Activated CD4-positive, alpha-beta memory T cell treated with anti-CD3 and anti-CD28 coated beads for 36 hours (primary cell): ENCODE measurements at regions of chr7 and their contacts with region 1.

Region 1: DNA sequence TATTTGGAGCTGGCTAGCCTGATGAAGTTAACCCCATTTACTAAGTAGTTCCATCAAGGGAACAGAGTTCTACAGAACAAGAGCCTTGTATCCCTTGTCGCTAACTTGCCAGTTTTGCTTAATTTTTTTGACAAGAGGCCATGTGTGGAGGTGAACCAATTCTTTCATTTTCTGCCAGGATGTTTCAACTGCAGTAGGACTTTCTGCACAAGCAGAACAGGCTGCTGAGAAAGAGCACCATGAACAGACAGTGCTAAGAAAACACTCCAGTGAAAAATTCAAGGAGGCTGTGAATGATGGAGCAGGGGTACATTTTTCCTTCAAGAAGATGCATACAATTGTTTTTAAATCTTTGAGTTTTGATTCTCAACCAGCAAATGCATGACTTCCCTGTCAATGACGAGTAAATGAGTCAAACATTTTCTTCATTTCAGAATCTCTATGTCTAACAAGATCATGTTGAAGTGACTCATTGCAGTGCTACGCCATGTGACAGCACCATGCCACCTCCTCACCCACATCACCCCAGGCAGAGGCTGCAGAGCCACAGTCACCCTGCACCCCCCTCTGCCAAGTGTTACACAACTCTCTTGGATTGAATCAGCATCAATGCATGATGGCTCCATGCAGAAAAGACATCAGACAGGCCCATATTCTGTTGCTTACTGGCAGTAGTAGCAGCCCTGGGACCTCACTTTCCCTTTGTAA is 193.1 kb downstream of the COBL start:
- DNase-seq: peak; percentile 92
- H3K4me3 Mint-ChIP-seq: peak overlapping the region; percentile 53
- H3K27ac Mint-ChIP-seq: peak overlapping the region; percentile 96
- H3K4me1 Mint-ChIP-seq: peaks cover 40% of the 10 kb centered on the region
- H3K27me3 Mint-ChIP-seq: peaks cover 1% of the 10 kb centered on the region

Region 2: DNA sequence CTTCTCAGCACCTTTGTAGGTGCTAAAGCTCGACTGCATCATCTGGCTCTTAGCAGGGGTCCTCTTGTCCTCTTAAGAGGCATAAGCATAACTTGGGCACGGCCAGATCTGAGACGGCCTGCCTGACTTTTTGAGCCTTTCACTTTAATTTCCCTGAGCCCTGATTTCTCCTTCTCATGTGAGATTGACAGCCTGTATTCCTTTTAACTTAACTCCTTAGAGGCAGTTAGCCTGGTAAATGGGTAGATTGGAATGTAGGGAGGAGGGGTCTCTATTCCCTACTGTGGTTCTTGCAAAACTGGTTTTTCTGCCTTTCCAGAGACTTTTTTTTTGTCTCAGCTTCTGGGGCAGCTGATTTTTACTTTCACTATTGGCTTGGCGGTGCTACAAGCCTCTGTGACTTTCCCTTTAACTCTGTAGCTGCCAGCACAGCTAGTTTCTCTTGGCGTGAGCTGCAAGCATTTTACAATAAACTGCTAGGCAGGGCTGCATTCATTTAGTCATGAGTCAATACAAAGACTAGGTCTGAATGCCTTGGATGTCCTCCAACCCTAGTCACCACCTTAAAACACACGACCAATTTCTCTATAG is 1054.4 kb before region 1 on chr7:
- CTCF ChIA-PET with region 1: no interaction called
- POLR2A ChIA-PET with region 1: no interaction called
- intact Hi-C with region 1: loop called (anchors 2 kb)
- DNase-seq: peak; percentile 46
- H3K4me3 Mint-ChIP-seq: peak overlapping the region; percentile 85
- H3K27ac Mint-ChIP-seq: peak overlapping the region; percentile 46
- H3K4me1 Mint-ChIP-seq: peaks cover 19% of the 10 kb centered on the region
- H3K27me3 Mint-ChIP-seq: no peaks in the 10 kb centered on the region

Region 3: DNA sequence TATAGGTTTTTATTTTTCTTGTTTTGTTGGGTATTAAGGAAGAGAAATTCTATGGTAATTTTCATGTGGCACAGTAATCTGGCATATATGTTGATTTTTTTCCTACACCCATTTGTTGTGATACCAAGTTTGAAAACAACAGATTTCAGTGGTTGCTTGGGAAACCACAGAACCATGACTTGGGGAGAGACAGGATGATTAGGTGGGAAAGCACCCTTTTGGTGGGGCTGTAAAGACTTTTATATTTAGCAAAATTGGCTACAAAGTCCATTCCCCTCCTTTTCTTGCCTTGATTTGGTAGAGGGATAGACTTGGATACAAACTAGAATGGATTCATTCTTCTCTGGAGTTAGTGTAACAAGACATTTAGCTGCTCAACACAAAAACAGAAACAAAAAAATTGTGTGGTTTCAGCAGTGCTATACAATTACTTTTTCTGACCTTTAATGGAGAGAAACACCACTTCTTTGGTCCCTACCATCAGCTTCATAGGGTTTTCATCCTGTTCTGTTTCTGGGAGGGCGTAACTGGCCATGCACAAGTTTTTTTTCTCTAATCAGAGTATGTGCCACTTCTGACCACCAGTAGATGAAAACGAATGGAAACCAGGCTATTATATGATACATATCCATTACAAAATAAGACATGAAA is 726.0 kb before region 1 on chr7:
- CTCF ChIA-PET with region 1: no interaction called
- POLR2A ChIA-PET with region 1: no interaction called
- intact Hi-C with region 1: loop called (anchors 1 kb)
- DNase-seq: peak; percentile 50
- H3K4me3 Mint-ChIP-seq: peak overlapping the region; percentile 20
- H3K27ac Mint-ChIP-seq: peak overlapping the region; percentile 84
- H3K4me1 Mint-ChIP-seq: peaks cover 79% of the 10 kb centered on the region
- H3K27me3 Mint-ChIP-seq: no peaks in the 10 kb centered on the region

Region 4: DNA sequence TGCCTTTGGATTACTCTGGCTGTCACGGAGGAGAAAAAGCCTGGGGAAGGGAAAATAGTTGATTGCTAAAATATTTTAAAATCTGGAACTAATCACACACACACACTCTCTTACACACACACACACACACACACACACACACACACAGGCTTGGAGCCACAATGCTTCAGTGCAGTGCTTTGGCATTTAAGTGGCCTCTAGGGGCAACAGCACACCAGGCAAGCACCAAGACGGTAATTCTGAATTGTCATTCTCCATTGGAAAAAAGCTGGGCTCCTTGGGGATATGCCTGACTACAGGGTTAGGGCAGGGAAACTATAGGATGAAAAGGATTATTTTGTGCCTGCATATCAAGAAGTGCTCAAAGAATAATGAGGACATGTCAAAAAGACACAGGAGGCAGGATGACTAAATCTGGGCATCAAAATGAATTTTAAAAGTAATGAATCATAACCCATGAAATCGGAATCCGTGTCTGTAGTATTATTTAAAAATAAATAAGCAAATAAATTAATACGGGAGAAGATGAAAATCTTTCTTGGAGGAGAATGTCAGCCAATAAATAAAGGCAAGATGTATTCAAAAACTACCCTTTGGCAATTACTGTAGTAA is 527.9 kb before region 1 on chr7:
- CTCF ChIA-PET with region 1: no interaction called
- POLR2A ChIA-PET with region 1: no interaction called
- intact Hi-C with region 1: loop called (anchors 1 kb)
- DNase-seq: peak; percentile 24
- H3K4me3 Mint-ChIP-seq: no peak overlapping the region
- H3K27ac Mint-ChIP-seq: no peak overlapping the region
- H3K4me1 Mint-ChIP-seq: peaks cover 21% of the 10 kb centered on the region
- H3K27me3 Mint-ChIP-seq: peaks cover 6% of the 10 kb centered on the region

Region 5: DNA sequence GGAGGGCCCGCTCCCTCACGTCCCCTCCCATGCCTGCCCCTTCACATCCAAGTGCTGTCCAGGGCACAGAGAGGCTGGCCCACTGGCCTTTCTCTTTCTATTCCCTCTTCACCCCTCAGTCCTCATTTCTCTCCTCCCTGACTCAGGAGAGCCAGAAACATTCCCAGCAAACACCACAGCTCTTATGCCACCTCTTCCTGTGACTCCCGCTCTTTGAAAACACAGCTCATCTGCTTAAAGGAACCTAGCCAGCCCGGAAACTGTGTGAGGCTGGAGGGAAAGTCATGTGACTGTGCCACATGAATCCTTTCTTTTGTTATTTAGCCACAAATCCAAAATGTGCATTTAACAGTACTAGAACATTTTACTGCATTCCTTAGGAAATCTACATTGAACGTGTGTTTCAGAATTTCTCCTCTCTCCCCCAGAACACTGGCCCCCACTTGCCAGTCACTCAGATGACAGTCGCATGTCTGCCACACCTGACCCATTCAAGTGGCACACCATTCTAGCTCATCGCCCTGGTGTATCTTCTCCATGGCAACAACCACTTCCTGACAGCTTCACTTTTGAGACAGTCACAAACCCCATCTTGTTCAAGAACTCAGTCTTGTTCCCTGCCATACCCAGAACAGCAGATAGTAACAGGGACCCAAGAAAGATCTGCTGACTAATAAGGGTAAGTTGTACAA is 383.6 kb before region 1 on chr7:
- CTCF ChIA-PET with region 1: no interaction called
- POLR2A ChIA-PET with region 1: no interaction called
- intact Hi-C with region 1: loop called (anchors 2 kb)
- DNase-seq: peak; percentile 80
- H3K4me3 Mint-ChIP-seq: peak overlapping the region; percentile 62
- H3K27ac Mint-ChIP-seq: peak overlapping the region; percentile 68
- H3K4me1 Mint-ChIP-seq: peaks cover 27% of the 10 kb centered on the region
- H3K27me3 Mint-ChIP-seq: no peaks in the 10 kb centered on the region

Region 6: GRCh38 chr7:50826371-50827172 is 296.9 kb before region 1 on chr7:
- CTCF ChIA-PET with region 1: no interaction called
- POLR2A ChIA-PET with region 1: no interaction called
- intact Hi-C with region 1: loop called (anchors 2 kb)
- DNase-seq: peak; percentile 73
- H3K4me3 Mint-ChIP-seq: no peak overlapping the region
- H3K27ac Mint-ChIP-seq: peak overlapping the region; percentile 1
- H3K4me1 Mint-ChIP-seq: peaks cover 15% of the 10 kb centered on the region
- H3K27me3 Mint-ChIP-seq: peaks cover 9% of the 10 kb centered on the region

Region 7: DNA sequence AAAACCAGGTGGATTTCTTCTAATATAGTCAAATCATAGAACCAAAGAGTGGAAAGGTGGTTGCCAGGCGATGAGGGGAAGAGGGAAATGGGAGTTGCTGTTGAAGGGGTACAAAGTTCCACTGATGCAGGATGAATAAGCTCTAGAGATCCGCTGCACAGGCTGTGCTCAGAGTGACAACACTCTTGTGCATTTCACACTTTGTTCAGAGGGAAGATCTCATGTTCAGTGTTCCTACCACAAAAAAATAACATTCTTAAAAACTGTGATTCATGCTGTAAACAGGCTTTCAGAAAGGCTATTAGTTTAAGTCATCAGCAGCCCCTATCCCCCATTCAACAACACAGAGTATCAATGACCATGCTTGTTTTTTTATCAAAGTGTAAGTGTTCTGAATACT is 20.6 kb before region 1 on chr7:
- CTCF ChIA-PET with region 1: no interaction called
- POLR2A ChIA-PET with region 1: no interaction called
- intact Hi-C with region 1: no loop called
- DNase-seq: no peak
- H3K4me3 Mint-ChIP-seq: no peak overlapping the region
- H3K27ac Mint-ChIP-seq: no peak overlapping the region
- H3K4me1 Mint-ChIP-seq: no peaks in the 10 kb centered on the region
- H3K27me3 Mint-ChIP-seq: no peaks in the 10 kb centered on the region

Region 8: DNA sequence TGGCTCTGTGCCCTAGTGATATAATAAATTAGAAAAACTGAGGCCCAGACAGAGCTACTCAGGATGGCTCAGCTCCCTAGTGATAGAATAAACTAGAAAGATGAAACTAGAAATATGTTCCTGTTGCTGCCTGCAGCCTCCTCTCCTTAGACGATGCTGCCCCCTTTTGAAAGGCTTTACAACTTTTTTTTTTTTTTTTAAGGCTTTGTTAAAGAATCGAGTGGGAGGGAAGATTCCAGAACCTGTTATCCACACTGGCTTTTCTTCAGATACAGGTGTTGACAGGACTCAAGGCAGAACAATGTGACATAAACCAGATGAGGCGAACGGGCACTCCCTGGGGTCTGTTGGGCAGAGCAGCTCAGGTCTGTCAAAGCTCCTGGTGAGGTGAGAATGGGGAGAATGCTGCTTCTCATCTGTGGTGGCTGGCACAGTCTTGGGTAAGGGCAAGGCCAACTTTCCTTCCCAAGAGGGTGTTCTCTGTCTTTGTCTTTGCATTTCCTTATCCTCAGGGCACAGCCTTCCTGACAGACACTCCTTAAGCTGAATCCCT is 18.1 kb after region 1 on chr7:
- CTCF ChIA-PET with region 1: interaction called, 8 read pairs
- POLR2A ChIA-PET with region 1: interaction called, 4 read pairs
- intact Hi-C with region 1: loop called (anchors 1 kb)
- DNase-seq: peak; percentile 27
- H3K4me3 Mint-ChIP-seq: no peak overlapping the region
- H3K27ac Mint-ChIP-seq: no peak overlapping the region
- H3K4me1 Mint-ChIP-seq: peaks cover 17% of the 10 kb centered on the region
- H3K27me3 Mint-ChIP-seq: peaks cover 5% of the 10 kb centered on the region